K562 (cell line): ENCODE measurements at regions of chr19 and their contacts with region 1.

Region 1: DNA sequence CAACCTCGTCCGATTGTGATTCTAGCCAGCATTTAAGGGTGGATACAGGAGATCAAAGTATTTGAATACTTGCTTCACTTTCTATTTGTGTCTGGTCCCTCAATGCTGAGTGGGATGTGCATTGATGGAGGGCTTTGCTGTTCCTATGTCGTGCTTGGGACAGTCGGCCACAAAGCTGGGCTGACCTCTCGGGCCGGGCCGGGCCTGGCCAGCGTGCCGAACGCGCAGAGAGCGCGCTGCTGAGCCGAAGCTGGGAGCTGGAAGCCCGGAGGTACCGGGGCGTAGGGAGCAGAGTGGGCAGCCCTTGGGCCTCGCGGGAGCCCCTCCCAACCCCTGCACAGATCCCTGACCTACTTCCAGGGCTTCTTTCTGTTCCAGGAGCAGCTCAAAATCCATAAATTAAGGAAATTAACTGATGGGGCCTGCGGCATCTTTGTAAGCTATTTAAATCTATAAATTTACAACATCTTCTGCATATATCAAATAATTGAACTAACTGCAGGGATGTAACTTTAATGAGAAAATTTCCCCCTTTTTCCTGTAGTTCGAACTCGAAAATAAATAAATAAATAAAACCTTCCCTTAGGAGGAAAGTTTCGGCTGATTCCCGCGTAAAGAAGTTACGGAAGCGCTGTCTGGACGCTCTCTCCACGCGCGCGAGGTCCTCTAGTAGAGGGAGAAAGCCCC is 1.8 kb upstream of the KCTD15 start:
- DNase-seq: no peak
- ATAC-seq: no peak
- H3K4me3 ChIP-seq: peak overlapping the region; percentile 71
- H3K27ac ChIP-seq: peak overlapping the region; percentile 85; the same call in 1 of the 3 replicates
- H3K4me1 ChIP-seq: peaks cover 0 to 34% of the 10 kb centered on the region in 2 experiments; a peak in 2 of 5 replicates
- H3K27me3 ChIP-seq: peaks cover 10 to 20% of the 10 kb centered on the region in 2 experiments; a peak in 3 of 5 replicates
- CTCF ChIP-seq: no peak
- EP300 ChIP-seq: no peak
- POLR2A ChIP-seq: no peak
- RAD21 ChIP-seq: no peak

Region 2: GRCh38 chr19:33841685-33842084 is 46.9 kb after region 1 on chr19:
- CTCF ChIA-PET with region 1: no interaction called
- POLR2A ChIA-PET with region 1: no interaction called
- in situ Hi-C with region 1: no loop called
- intact Hi-C with region 1: no loop called
- DNase-seq: no peak
- ATAC-seq: no peak
- H3K4me3 ChIP-seq: no peak overlapping the region
- H3K27ac ChIP-seq: no peak overlapping the region
- H3K4me1 ChIP-seq: no peaks in the 10 kb centered on the region
- H3K27me3 ChIP-seq: peaks cover 6 to 27% of the 10 kb centered on the region in 2 experiments; a peak in 3 of 5 replicates
- CTCF ChIP-seq: no peak
- EP300 ChIP-seq: no peak
- POLR2A ChIP-seq: no peak
- RAD21 ChIP-seq: no peak

Region 3: DNA sequence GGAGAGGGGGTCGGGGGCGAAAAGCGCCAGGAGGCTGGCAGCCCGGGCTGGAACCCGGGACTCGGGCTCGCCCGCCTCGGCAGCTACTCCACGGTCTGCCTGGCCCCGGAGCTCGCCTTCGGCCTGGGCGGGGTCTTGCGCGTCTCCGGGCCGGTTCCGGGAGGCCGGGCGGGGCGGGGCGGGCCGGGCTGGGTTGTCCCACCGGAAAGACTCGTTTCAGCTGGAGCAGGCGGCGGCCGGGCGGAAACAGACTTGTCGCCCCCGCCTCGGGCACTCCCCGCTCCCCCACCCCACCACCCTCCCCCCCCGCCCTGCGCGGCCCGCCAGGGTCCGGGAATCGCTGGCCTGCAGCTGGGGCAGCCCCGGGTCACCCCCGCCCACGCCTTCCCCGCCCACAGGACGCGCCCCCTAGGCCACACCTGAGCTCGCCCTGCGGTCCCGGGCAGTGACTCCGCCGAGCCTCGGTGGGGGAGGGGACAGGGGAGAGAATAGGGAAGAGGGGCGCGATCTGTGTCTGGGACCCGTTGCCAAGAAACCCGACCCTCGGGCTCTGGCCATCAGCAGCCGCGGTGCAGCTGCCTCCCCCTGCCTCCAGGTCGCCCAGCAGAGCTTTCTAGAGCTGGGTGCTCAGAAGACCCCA is 111.2 kb after region 1 on chr19:
- CTCF ChIA-PET with region 1: no interaction called
- POLR2A ChIA-PET with region 1: no interaction called
- in situ Hi-C with region 1: no loop called
- intact Hi-C with region 1: no loop called
- DNase-seq: peak; percentile 11 to 75 (median 49)
- ATAC-seq: peak; percentile 43
- H3K4me3 ChIP-seq: no peak overlapping the region
- H3K27ac ChIP-seq: no peak overlapping the region
- H3K4me1 ChIP-seq: peaks cover 0 to 16% of the 10 kb centered on the region in 2 experiments; a peak in 2 of 5 replicates
- H3K27me3 ChIP-seq: peaks cover 10 to 21% of the 10 kb centered on the region in 2 experiments; a peak in 4 of 5 replicates
- CTCF ChIP-seq: no peak
- EP300 ChIP-seq: no peak
- POLR2A ChIP-seq: no peak
- RAD21 ChIP-seq: no peak

Region 4: DNA sequence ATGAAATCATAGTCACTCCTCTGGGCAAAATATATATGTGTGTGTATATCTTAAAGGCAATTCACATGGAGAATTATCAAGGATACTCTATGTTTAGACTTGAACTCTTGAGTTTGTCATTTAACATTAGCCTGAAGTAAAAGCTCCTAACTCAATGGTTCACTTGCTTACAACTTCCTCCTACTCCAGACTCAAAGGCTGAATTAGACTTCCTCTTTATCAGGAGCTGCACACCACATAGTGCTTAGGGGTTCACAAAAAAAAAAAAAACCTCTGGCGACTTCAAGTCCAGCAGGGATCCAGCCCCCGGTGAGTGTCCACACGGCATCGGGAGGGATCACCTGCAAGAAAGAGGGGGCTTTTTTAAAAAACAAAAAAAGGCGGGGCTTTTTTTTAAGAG is 309.3 kb after region 1 on chr19:
- CTCF ChIA-PET with region 1: no interaction called
- POLR2A ChIA-PET with region 1: no interaction called
- in situ Hi-C with region 1: no loop called
- intact Hi-C with region 1: loop called (anchors 5 kb)
- DNase-seq: no peak
- ATAC-seq: peak; percentile 58
- H3K4me3 ChIP-seq: no peak overlapping the region
- H3K27ac ChIP-seq: no peak overlapping the region
- H3K4me1 ChIP-seq: no peaks in the 10 kb centered on the region; a peak in 1 of 5 replicates
- H3K27me3 ChIP-seq: peaks cover 13 to 14% of the 10 kb centered on the region in 2 experiments; a peak in 4 of 5 replicates
- CTCF ChIP-seq: no peak
- EP300 ChIP-seq: no peak
- POLR2A ChIP-seq: no peak
- RAD21 ChIP-seq: no peak